Activated naive CD8-positive, alpha-beta T cell treated with anti-CD3 and anti-CD28 coated beads, Interleukin-2, amount 10 ng/mL, durations not matched to agents 7 days and 5 days (primary cell): ENCODE measurements at regions of chr12 and their contacts with region 1.

Region 1: GRCh38 chr12:113196996-113197395 is 11.5 kb downstream of the RITA1 start:
- DNase-seq: peak; percentile 51
- ATAC-seq: peak; percentile 92
- H3K4me3 Mint-ChIP-seq: no peak overlapping the region
- H3K27ac Mint-ChIP-seq: no peak overlapping the region
- H3K4me1 Mint-ChIP-seq: peaks cover 13% of the 10 kb centered on the region
- H3K27me3 Mint-ChIP-seq: no peaks in the 10 kb centered on the region

Region 2: DNA sequence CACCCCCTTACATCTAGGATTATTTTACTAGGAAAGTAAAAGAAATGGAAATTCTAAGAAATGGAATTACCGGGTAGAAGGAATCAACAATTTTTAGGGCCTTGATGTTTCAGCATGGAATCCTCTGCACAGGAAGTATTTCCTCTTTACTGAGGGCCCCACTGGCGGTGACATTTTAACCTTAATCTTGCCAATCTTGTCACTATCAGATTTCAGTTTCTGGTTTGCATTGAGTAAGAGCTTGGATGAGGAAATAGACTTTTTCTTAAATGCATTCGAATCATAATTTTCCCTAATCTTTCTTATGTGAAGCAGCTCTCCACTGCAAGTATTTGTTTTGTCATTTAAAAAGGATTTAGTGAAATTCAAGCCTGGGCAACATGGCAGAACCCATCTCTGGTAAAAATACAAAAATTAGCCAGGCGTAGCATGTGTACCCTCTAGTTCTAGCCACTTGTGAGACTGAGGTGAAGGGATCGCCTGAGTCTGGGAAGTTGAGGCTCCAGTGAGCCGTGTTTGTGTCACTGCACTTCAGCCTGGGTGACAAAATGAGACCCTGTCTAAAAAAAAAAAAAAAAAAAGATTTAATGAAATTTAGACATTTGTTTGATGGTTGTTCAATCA is 65.0 kb after region 1 on chr12:
- POLR2A ChIA-PET with region 1: no interaction called
- DNase-seq: no peak
- ATAC-seq: peak; percentile 88
- H3K4me3 Mint-ChIP-seq: peak overlapping the region; percentile 71
- H3K27ac Mint-ChIP-seq: peak overlapping the region; percentile 92
- H3K4me1 Mint-ChIP-seq: peaks cover 48% of the 10 kb centered on the region
- H3K27me3 Mint-ChIP-seq: no peaks in the 10 kb centered on the region

Region 3: DNA sequence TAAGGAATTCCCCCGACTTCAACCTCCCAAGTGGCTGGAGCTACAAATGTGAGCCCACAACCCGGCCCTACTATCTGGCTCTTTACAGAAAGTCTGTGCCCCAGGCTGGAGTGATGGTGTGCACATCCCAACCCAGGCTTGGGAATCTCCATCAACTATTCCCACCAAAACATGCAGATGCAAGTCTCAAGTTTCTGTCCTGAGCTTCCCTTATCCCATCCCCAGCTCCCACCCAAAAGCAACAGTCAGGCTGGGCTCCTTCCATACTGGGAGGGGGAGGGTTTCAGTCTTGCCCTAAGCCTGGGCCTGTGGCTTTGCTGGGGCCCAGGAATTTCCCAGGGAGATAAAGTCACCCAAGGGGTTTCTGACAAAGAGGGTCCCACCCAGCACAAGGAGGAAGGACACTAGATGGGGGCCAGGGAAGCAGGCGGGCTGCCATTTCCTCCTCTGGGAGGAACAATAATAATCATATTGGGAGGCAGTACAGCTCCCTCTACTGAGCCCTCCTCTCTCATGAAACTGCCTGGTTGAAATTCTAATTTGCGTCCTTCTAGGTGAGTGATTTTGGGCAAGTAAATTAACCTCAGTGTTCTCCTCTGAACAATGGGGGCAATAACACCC is 129.9 kb after region 1 on chr12:
- POLR2A ChIA-PET with region 1: interaction called, 12 read pairs
- DNase-seq: no peak
- ATAC-seq: no peak
- H3K4me3 Mint-ChIP-seq: no peak overlapping the region
- H3K27ac Mint-ChIP-seq: no peak overlapping the region
- H3K4me1 Mint-ChIP-seq: peaks cover 6% of the 10 kb centered on the region
- H3K27me3 Mint-ChIP-seq: no peaks in the 10 kb centered on the region